CD8-positive, alpha-beta T cell (primary cell): ENCODE measurements at regions of chr14 and their contacts with region 1.

Region 1: GRCh38 chr14:50860478-50861086 is 11.3 kb upstream of the ABHD12B start:
- DNase-seq: peak; percentile 84 to 93 (median 90)
- ATAC-seq: peak; percentile 77
- H3K4me3 ChIP-seq: peak overlapping the region; percentile 72 to 98
- H3K4me3 Mint-ChIP-seq: peak overlapping the region; percentile 93
- H3K27ac ChIP-seq: peak overlapping the region in 1 of 2 experiments; percentile 65
- H3K27ac Mint-ChIP-seq: peak overlapping the region; percentile 87
- H3K4me1 ChIP-seq: peaks cover 11% of the 10 kb centered on the region
- H3K4me1 Mint-ChIP-seq: peaks cover 13% of the 10 kb centered on the region
- H3K27me3 ChIP-seq: no peaks in the 10 kb centered on the region
- H3K27me3 Mint-ChIP-seq: no peaks in the 10 kb centered on the region
- CTCF ChIP-seq: peak; percentile 83

Region 2: GRCh38 chr14:50542941-50543418 is 317.6 kb before region 1 on chr14:
- CTCF ChIA-PET with region 1: interaction called, 26 read pairs
- POLR2A ChIA-PET with region 1: no interaction called
- intact Hi-C with region 1: loop called (anchors 1 to 2 kb)
- DNase-seq: peak in 6 of 9 experiments; percentile 19 to 70 (median 28)
- ATAC-seq: peak; percentile 81
- H3K4me3 ChIP-seq: no peak overlapping the region
- H3K4me3 Mint-ChIP-seq: no peak overlapping the region
- H3K27ac ChIP-seq: no peak overlapping the region
- H3K27ac Mint-ChIP-seq: no peak overlapping the region
- H3K4me1 ChIP-seq: peaks cover 5% of the 10 kb centered on the region
- H3K4me1 Mint-ChIP-seq: peaks cover 11% of the 10 kb centered on the region
- H3K27me3 ChIP-seq: no peaks in the 10 kb centered on the region
- H3K27me3 Mint-ChIP-seq: no peaks in the 10 kb centered on the region
- CTCF ChIP-seq: peak; percentile 47

Region 3: GRCh38 chr14:50726372-50727107 is 134.0 kb before region 1 on chr14:
- CTCF ChIA-PET with region 1: interaction called, 10 read pairs
- POLR2A ChIA-PET with region 1: interaction called, 3 read pairs
- intact Hi-C with region 1: no loop called
- DNase-seq: peak in 2 of 9 experiments; percentile 39 to 69
- ATAC-seq: peak; percentile 92
- H3K4me3 ChIP-seq: no peak overlapping the region
- H3K4me3 Mint-ChIP-seq: peak overlapping the region; percentile 12
- H3K27ac ChIP-seq: peak overlapping the region; percentile 7 to 41
- H3K27ac Mint-ChIP-seq: peak overlapping the region; percentile 86
- H3K4me1 ChIP-seq: peaks cover 12% of the 10 kb centered on the region
- H3K4me1 Mint-ChIP-seq: peaks cover 29% of the 10 kb centered on the region
- H3K27me3 ChIP-seq: no peaks in the 10 kb centered on the region
- H3K27me3 Mint-ChIP-seq: no peaks in the 10 kb centered on the region
- CTCF ChIP-seq: no peak

Region 4: DNA sequence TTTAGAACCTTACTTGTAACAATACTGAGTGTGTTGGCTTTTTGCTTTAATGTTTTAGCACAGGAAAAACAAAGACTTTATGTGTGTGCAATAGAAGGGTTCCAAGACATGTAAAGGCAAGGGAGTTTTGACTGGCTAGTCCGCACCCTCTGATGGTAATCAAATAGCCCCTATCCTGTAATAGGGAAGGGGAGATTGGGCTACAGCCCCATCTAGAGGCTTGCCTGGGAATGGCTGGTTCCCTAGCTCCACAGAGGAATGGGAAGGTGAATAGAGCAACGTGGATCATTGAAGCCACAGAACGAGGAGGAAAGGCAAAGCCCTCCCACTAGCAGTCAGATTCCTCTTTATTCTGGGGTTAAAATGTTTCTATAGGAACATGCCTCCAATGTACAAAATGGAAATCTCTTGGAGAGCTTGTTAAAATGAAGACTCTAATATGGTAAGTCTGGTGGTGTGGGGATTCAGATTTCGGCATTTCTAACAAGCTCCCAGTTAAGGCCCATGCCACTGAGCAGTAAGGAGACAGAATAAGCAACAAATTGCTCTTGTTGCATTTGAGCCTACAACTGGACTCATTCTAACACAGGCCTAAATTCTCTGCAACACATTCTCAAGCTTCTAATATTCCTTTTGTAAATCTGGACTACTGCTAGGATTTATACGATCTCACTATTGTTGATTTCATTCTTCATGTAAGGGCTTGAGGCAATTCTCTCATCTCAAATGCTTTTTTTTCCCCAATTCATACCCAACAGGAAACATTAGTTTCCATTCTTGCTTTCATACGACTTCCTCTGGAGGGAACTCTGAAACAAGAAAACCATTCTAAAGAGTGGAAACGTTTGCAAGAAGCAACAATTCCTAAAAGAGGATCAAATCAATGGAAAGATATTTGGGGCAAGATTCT is 86.7 kb before region 1 on chr14:
- CTCF ChIA-PET with region 1: interaction called, 186 read pairs
- POLR2A ChIA-PET with region 1: interaction called, 13 read pairs
- intact Hi-C with region 1: loop called (anchors 1 to 2 kb)
- DNase-seq: peak in 3 of 9 experiments; percentile 17 to 42 (median 24)
- ATAC-seq: peak; percentile 64
- H3K4me3 ChIP-seq: no peak overlapping the region
- H3K4me3 Mint-ChIP-seq: no peak overlapping the region
- H3K27ac ChIP-seq: no peak overlapping the region
- H3K27ac Mint-ChIP-seq: peak overlapping the region; percentile 13
- H3K4me1 ChIP-seq: peaks cover 21% of the 10 kb centered on the region
- H3K4me1 Mint-ChIP-seq: peaks cover 29% of the 10 kb centered on the region
- H3K27me3 ChIP-seq: no peaks in the 10 kb centered on the region
- H3K27me3 Mint-ChIP-seq: no peaks in the 10 kb centered on the region
- CTCF ChIP-seq: peak; percentile 70

Region 5: GRCh38 chr14:50792051-50792477 is 68.5 kb before region 1 on chr14:
- CTCF ChIA-PET with region 1: interaction called, 144 read pairs
- POLR2A ChIA-PET with region 1: interaction called, 10 read pairs
- intact Hi-C with region 1: no loop called
- DNase-seq: peak in 4 of 9 experiments; percentile 18 to 70 (median 50)
- ATAC-seq: peak; percentile 54
- H3K4me3 ChIP-seq: peak overlapping the region; percentile 30 to 39
- H3K4me3 Mint-ChIP-seq: peak overlapping the region; percentile 79
- H3K27ac ChIP-seq: peak overlapping the region; percentile 59 to 75
- H3K27ac Mint-ChIP-seq: peak overlapping the region; percentile 98
- H3K4me1 ChIP-seq: peaks cover 60% of the 10 kb centered on the region
- H3K4me1 Mint-ChIP-seq: peaks cover 95% of the 10 kb centered on the region
- H3K27me3 ChIP-seq: no peaks in the 10 kb centered on the region
- H3K27me3 Mint-ChIP-seq: no peaks in the 10 kb centered on the region
- CTCF ChIP-seq: no peak

Region 6: DNA sequence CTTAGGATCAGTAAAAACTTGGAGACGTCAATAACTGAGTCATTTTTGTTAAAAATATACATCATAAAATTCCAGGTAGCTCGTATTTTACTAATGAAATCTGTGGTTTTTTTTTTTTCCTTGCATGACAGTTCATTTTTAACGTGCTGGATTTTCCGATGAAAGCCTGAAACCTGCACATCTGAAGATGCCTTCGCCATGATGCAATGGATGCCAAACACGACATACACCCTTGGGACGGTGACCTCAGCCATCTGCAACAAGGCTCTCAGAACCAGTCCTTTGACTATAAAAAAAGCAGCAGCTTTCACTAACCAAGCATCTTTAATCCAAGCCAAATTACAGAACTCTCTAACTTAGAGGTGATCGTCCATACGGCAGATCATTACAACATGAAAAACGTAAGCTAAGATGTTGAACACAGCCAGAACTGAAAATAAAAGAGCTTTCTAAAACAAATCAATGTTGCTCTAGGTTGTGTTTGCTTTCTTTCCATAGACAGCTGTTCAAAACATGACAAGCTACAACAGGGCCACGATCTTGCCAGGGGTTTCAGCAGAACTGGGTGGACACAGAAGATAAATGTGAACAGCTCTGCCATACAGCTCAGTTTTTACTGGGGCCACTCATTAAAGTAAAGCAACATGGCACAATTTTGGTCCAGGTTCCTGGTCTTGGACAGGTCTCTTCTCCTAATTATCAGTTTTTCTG is 37.4 kb before region 1 on chr14:
- CTCF ChIA-PET with region 1: interaction called, 40 read pairs
- POLR2A ChIA-PET with region 1: interaction called, 19 read pairs
- intact Hi-C with region 1: loop called in 1 of 2 experiments (anchors 5 kb)
- DNase-seq: peak in 2 of 9 experiments; percentile 13 to 36
- ATAC-seq: no peak
- H3K4me3 ChIP-seq: peak overlapping the region; percentile 21 to 28
- H3K4me3 Mint-ChIP-seq: peak overlapping the region; percentile 79
- H3K27ac ChIP-seq: peak overlapping the region; percentile 54 to 64
- H3K27ac Mint-ChIP-seq: peak overlapping the region; percentile 98
- H3K4me1 ChIP-seq: peaks cover 93% of the 10 kb centered on the region
- H3K4me1 Mint-ChIP-seq: peaks cover 91% of the 10 kb centered on the region
- H3K27me3 ChIP-seq: no peaks in the 10 kb centered on the region
- H3K27me3 Mint-ChIP-seq: no peaks in the 10 kb centered on the region
- CTCF ChIP-seq: no peak

Region 7: DNA sequence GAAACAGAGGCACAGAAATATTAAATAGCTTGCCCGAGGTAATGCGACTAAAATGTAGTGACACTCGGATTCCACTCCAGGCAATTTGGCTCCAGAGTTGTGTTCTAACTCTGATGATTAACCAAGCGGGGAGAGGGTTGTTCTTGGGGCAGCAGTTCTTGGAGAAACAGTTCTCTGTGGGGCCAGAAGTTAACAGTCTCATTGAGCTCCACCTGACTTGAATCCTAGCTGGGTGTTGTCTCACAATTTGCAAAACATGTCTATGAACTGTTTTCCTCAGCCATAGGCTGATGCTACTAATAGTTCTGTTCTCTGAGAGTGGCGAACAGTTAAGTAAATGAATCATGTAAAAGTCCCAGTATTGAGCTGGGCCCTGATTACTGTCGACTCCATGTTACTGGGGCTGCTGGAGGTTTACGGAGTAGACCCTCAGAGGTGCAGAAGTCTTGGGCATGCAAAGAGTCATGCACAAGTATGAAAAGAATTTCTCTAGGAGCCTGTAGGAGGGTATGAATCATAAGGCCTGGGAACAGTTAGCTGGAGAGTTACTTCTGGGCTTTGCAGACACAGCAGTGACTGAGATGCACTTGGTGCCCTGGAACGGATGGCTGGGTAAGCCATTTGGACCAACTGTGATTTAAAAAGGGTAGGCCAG is 14.2 kb before region 1 on chr14:
- CTCF ChIA-PET with region 1: interaction called, 18 read pairs
- POLR2A ChIA-PET with region 1: interaction called, 9 read pairs
- intact Hi-C with region 1: no loop called
- DNase-seq: no peak
- ATAC-seq: no peak
- H3K4me3 ChIP-seq: no peak overlapping the region
- H3K4me3 Mint-ChIP-seq: no peak overlapping the region
- H3K27ac ChIP-seq: no peak overlapping the region
- H3K27ac Mint-ChIP-seq: no peak overlapping the region
- H3K4me1 ChIP-seq: no peaks in the 10 kb centered on the region
- H3K4me1 Mint-ChIP-seq: peaks cover 8% of the 10 kb centered on the region
- H3K27me3 ChIP-seq: no peaks in the 10 kb centered on the region
- H3K27me3 Mint-ChIP-seq: no peaks in the 10 kb centered on the region
- CTCF ChIP-seq: no peak